ENCODE measurements at regions of chr19 and their contacts with region 1.

Region 1: DNA sequence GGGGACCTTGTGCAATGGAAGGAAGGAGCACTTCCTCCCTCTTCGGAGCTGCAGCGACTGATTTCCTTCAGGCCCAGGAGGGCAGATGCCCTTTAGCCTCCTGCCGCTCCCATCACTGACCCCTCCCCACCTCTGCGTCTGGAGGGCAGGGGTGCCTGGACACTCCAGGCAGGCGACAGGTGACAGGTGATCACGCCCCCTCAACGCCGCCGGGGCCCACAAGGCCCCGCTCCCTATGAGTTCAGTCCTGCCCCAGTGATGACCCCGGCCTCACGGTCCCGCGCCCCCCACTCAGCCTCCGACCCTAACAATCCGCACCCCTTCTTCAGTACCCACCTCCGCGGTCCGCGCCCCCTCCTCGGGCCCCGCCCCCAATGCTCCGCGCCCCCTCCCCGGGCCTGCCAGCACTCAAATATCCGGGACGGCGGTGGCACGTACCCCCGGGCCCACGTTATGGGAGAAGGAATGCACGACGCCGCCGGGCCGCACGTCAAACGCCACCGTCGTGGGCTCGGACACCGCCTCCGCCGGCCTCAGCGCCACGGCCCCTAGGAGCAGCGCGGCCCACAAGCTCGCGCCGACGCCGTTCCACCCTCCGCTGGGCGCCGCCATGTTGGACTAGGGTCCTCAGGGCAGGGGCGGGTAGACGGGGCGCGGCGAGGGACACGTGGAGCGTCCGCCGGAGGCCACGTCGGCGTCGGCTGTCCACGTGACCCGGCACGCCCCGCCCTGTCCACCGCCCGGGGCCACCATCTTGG is at the start of gene MYDGF:
- DNase-seq: peak; percentile 94 to 97 (median 95)
- ATAC-seq: peak; percentile 97 to 99 (median 98)
- H3K4me3 ChIP-seq: peak within 1 kb of the TSS; percentile 53 to 95 (median 86)
- H3K27ac ChIP-seq: peak within 1 kb of the TSS; percentile 29 to 85 (median 76)
- H3K4me1 ChIP-seq: peaks cover 0 to 30% (median 20%) of the 10 kb centered on the region in 12 donors
- H3K27me3 ChIP-seq: no peaks in the 10 kb centered on the region
- CTCF ChIP-seq: no peak
- POLR2A ChIP-seq: peak in 1 of 2 donors; percentile 57
- total RNA-seq, gene MYDGF: 19.1 to 49.1 (median 25.5) TPM

Region 2: GRCh38 chr19:4576016-4576933 is 93.6 kb before region 1 on chr19:
- intact Hi-C with region 1: no loop called
- DNase-seq: peak; percentile 59 to 86 (median 69)
- ATAC-seq: peak; percentile 21 to 55 (median 46)
- H3K4me3 ChIP-seq: no peak overlapping the region
- H3K27ac ChIP-seq: peak overlapping the region in 11 of 12 donors; percentile 60 to 90 (median 85)
- H3K4me1 ChIP-seq: peaks cover 0 to 31% (median 12%) of the 10 kb centered on the region in 12 donors
- H3K27me3 ChIP-seq: peaks cover 6 to 55% (median 21%) of the 10 kb centered on the region in 9 donors
- CTCF ChIP-seq: peak; percentile 50 to 73 (median 66)
- POLR2A ChIP-seq: no peak

Region 3: GRCh38 chr19:4694209-4694987 is 24.5 kb after region 1 on chr19:
- intact Hi-C with region 1: no loop called
- DNase-seq: peak in 2 of 5 donors; percentile 73 to 79
- ATAC-seq: peak in 3 of 4 donors; percentile 47 to 64 (median 50)
- H3K4me3 ChIP-seq: no peak overlapping the region
- H3K27ac ChIP-seq: peak overlapping the region; percentile 26 to 85 (median 69)
- H3K4me1 ChIP-seq: peaks cover 0 to 43% (median 11%) of the 10 kb centered on the region in 12 donors
- H3K27me3 ChIP-seq: no peaks in the 10 kb centered on the region
- CTCF ChIP-seq: no peak
- POLR2A ChIP-seq: no peak

Region 4: GRCh38 chr19:4707956-4708650 is 38.2 kb after region 1 on chr19:
- intact Hi-C with region 1: loop called in 2 of 10 experiments (anchors 5 kb)
- DNase-seq: peak in 4 of 5 donors; percentile 53 to 84 (median 74)
- ATAC-seq: peak; percentile 71 to 85 (median 80)
- H3K4me3 ChIP-seq: no peak overlapping the region
- H3K27ac ChIP-seq: peak overlapping the region; percentile 69 to 89 (median 74)
- H3K4me1 ChIP-seq: peaks cover 2 to 50% (median 42%) of the 10 kb centered on the region in 12 donors
- H3K27me3 ChIP-seq: no peaks in the 10 kb centered on the region
- CTCF ChIP-seq: no peak
- POLR2A ChIP-seq: no peak